B cell (primary cell): ENCODE measurements at regions of chr18 and their contacts with region 1.

Region 1: GRCh38 chr18:58195278-58195765 is 151.3 kb downstream of the NEDD4L start:
- DNase-seq: peak; percentile 47
- ATAC-seq: peak; percentile 63
- H3K4me3 ChIP-seq: peak overlapping the region; percentile 15 to 71 (median 54)
- H3K4me3 Mint-ChIP-seq: peak overlapping the region; percentile 94
- H3K27ac ChIP-seq: no peak overlapping the region
- H3K27ac Mint-ChIP-seq: peak overlapping the region; percentile 33
- H3K4me1 ChIP-seq: peaks cover 7 to 12% of the 10 kb centered on the region in 2 donors
- H3K4me1 Mint-ChIP-seq: peaks cover 25% of the 10 kb centered on the region
- H3K27me3 ChIP-seq: no peaks in the 10 kb centered on the region
- H3K27me3 Mint-ChIP-seq: no peaks in the 10 kb centered on the region
- CTCF ChIP-seq: no peak

Region 2: DNA sequence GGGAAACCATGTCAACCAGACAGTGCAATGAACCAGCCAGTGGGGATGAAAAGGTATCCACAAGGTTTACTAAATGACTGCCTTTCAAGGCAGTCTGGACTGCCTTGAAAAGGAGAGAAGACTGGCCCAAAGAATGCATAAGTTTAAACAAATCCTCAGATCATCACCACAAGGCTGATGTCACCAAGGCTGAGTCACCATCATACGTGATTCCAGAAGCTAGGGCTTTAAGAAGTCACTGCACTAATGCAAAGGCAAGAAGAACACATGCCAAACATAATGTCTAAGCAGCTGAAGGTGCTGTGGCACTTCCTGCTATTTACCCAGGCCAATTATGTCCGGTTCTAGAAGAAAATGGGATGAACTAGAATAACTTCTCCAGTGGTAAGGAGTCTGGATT is 797.9 kb before region 1 on chr18:
- CTCF ChIA-PET with region 1: no interaction called
- POLR2A ChIA-PET with region 1: no interaction called
- intact Hi-C with region 1: no loop called
- DNase-seq: no peak
- ATAC-seq: no peak
- H3K4me3 ChIP-seq: no peak overlapping the region
- H3K4me3 Mint-ChIP-seq: no peak overlapping the region
- H3K27ac ChIP-seq: no peak overlapping the region
- H3K27ac Mint-ChIP-seq: no peak overlapping the region
- H3K4me1 ChIP-seq: no peaks in the 10 kb centered on the region
- H3K4me1 Mint-ChIP-seq: no peaks in the 10 kb centered on the region
- H3K27me3 ChIP-seq: peaks cover 0 to 2% (median 0%) of the 10 kb centered on the region in 4 experiments
- H3K27me3 Mint-ChIP-seq: peaks cover 7% of the 10 kb centered on the region
- CTCF ChIP-seq: no peak

Region 3: DNA sequence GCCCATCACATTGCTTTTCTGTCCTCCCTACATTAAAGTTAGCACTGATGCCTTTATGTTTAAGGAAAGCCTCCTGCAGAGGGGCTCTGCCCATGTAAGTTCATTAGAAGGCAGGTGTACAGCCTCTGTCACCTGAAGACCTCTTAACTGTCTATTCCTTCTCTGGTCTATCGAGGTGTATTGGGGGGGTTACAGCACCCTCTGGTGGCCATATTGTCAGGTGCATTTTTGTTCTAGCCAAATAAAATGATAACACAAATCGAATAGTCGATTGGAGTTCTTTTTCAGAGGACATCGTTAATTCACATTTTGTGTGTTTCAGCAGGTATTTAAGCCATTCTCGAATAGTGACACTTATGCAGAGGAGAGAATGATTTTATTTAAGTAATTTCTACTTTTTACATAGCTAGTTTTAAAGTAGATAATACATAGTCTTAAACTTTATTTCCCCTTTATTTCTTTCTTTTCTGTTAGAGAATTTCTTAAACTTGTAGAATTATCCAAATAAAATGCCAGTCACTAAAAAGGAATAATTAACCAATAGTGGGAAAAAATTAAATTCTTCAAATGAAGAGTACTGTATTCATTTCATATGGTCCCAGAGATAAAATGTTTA is 14.5 kb before region 1 on chr18:
- CTCF ChIA-PET with region 1: interaction called, 14 read pairs
- POLR2A ChIA-PET with region 1: no interaction called
- intact Hi-C with region 1: no loop called
- DNase-seq: peak; percentile 71
- ATAC-seq: peak; percentile 62
- H3K4me3 ChIP-seq: no peak overlapping the region
- H3K4me3 Mint-ChIP-seq: no peak overlapping the region
- H3K27ac ChIP-seq: no peak overlapping the region
- H3K27ac Mint-ChIP-seq: no peak overlapping the region
- H3K4me1 ChIP-seq: no peaks in the 10 kb centered on the region
- H3K4me1 Mint-ChIP-seq: peaks cover 3% of the 10 kb centered on the region
- H3K27me3 ChIP-seq: no peaks in the 10 kb centered on the region
- H3K27me3 Mint-ChIP-seq: no peaks in the 10 kb centered on the region
- CTCF ChIP-seq: peak; percentile 94